ENCODE measurements at regions of chr17 and their contacts with region 1.

Region 1: DNA sequence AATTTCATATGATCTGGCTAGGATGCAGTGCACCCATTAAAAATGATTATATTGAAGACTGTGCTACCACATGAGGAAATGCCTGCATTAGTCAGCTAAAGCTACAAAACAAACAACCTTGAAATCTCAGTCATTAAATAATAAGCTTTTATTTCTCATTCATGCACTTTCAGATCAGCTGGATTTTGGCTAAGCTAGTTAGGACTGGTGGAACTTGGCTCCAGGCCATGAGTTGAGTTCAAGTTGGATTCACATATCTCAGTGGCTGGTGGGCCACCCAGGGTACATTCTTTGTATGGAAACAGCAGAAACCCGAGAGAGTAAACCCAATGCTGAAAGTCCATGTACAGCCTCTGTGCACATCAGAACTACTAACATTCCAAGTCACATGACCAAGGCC is 6.4 kb upstream of the SLFN12L start:
- DNase-seq: no peak
- ATAC-seq: no peak
- H3K4me3 ChIP-seq: no peak overlapping the region
- H3K27ac ChIP-seq: no peak overlapping the region
- H3K4me1 ChIP-seq: peaks cover 10 to 17% of the 10 kb centered on the region in 2 experiments; a peak in 3 of 5 replicates
- H3K27me3 ChIP-seq: no peaks in the 10 kb centered on the region
- CTCF ChIP-seq: no peak
- EP300 ChIP-seq: no peak
- POLR2A ChIP-seq: no peak
- RAD21 ChIP-seq: no peak

Region 2: GRCh38 chr17:34493917-34494316 is 1049.9 kb before region 1 on chr17:
- CTCF ChIA-PET with region 1: no interaction called
- POLR2A ChIA-PET with region 1: no interaction called
- in situ Hi-C with region 1: no loop called
- intact Hi-C with region 1: no loop called
- DNase-seq: no peak
- ATAC-seq: no peak
- H3K4me3 ChIP-seq: no peak overlapping the region
- H3K27ac ChIP-seq: no peak overlapping the region
- H3K4me1 ChIP-seq: no peaks in the 10 kb centered on the region
- H3K27me3 ChIP-seq: peaks cover 0 to 5% of the 10 kb centered on the region in 2 experiments; a peak in 1 of 5 replicates
- CTCF ChIP-seq: no peak
- EP300 ChIP-seq: no peak
- POLR2A ChIP-seq: no peak
- RAD21 ChIP-seq: no peak

Region 3: GRCh38 chr17:35555695-35556094 is 11.8 kb after region 1 on chr17:
- CTCF ChIA-PET with region 1: no interaction called
- POLR2A ChIA-PET with region 1: interaction called, 14 read pairs
- in situ Hi-C with region 1: no loop called
- intact Hi-C with region 1: no loop called
- DNase-seq: peak; percentile 47 to 62 (median 50)
- ATAC-seq: peak; percentile 65
- H3K4me3 ChIP-seq: no peak overlapping the region
- H3K27ac ChIP-seq: no peak overlapping the region
- H3K4me1 ChIP-seq: peaks cover 4 to 24% of the 10 kb centered on the region in 2 experiments
- H3K27me3 ChIP-seq: no peaks in the 10 kb centered on the region
- CTCF ChIP-seq: peak; percentile 55 to 73 (median 68); a peak in 5 of 6 replicates
- EP300 ChIP-seq: no peak
- POLR2A ChIP-seq: no peak
- RAD21 ChIP-seq: peak; percentile 53 to 69

Region 4: GRCh38 chr17:35560703-35561102 is 16.8 kb after region 1 on chr17 and contains the start of gene SLFN14:
- CTCF ChIA-PET with region 1: no interaction called
- POLR2A ChIA-PET with region 1: interaction called, 14 read pairs
- in situ Hi-C with region 1: no loop called
- intact Hi-C with region 1: no loop called
- DNase-seq: peak; percentile 88 to 98 (median 92)
- ATAC-seq: peak; percentile 84
- H3K4me3 ChIP-seq: peak within 1 kb of the TSS; percentile 15; the same call in 1 of the 2 replicates
- H3K27ac ChIP-seq: peak within 1 kb of the TSS; percentile 68
- H3K4me1 ChIP-seq: peaks cover 11 to 45% of the 10 kb centered on the region in 2 experiments
- H3K27me3 ChIP-seq: no peaks in the 10 kb centered on the region
- CTCF ChIP-seq: no peak
- EP300 ChIP-seq: peak; percentile 99
- POLR2A ChIP-seq: peak; percentile 67
- RAD21 ChIP-seq: no peak
- polyA plus RNA-seq, gene SLFN14: 1.6 to 3.1 TPM